ENCODE measurements at regions of chr5 and their contacts with region 1.

Region 1: DNA sequence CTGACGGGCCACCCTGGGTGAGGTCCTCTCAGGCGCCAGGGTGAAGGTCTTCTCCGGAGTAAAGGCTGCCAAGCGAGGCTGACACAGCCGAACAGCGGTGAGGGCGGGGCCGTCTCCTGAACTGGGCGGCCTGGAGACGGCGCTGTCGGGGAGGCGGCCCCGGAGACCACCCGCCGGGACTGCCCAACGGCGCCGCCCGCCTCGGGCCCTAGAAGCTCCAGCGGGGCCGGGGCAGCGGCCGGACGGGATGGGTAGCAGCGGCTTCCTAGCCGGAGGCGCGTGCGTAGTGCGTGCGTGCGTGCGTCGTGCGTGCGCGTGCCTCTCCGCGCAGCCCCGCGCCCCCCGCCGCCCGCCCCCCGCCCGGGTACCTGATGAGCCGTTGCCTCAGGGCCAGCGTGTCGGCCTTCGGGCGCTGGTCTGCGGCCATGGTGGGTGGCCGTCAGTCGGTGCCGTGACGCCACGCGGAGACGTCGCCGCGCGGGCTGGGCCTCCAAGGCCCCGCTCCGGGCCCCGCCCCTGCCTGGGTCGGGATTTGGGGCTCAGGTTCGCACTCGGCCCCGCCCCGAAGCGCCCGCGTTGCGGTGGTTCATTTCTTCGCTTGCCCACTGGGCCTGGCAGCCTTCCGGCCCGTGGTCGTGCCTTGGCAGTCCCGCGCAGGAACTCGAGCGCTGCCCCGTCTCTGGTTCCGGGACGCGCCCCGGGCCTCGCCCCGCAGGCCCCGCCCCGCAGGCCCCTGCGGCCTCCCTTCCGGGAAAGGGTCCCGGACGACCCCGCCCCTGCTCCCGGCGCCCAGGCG is at the start of gene PHYKPL:
- H3K4me3 ChIP-seq: peak within 1 kb of the TSS; percentile 76
- H3K27ac ChIP-seq: peak within 1 kb of the TSS; percentile 92
- H3K4me1 ChIP-seq: no peaks in the 10 kb centered on the region
- CTCF ChIP-seq: peak; percentile 67

Region 2: DNA sequence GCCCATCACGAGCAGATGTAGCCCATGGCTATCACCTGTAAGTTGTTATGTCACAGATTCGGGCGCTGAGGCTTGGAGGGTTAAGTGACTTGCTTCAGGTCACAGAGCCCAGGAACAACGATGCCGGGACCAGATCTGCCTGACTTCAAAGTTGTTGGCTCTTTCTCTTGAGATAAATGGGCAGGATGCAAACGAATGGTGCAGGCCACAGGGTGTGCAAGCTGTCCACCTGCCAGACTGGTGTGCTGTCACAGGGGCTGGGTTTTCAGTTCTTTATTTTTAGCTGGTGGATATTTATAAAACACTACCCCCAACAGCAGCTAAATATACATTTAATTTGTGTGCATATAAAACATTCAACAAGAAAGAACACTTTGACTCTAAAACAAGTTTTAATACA is 17.9 kb after region 1 on chr5:
- CTCF ChIA-PET with region 1: interaction called, 13 read pairs
- POLR2A ChIA-PET with region 1: no interaction called
- H3K4me3 ChIP-seq: no peak overlapping the region
- H3K27ac ChIP-seq: no peak overlapping the region
- H3K4me1 ChIP-seq: no peaks in the 10 kb centered on the region
- CTCF ChIP-seq: no peak

Region 3: GRCh38 chr5:178309271-178310013 is 77.1 kb after region 1 on chr5:
- CTCF ChIA-PET with region 1: no interaction called
- POLR2A ChIA-PET with region 1: no interaction called
- H3K4me3 ChIP-seq: no peak overlapping the region
- H3K27ac ChIP-seq: no peak overlapping the region
- H3K4me1 ChIP-seq: no peaks in the 10 kb centered on the region
- CTCF ChIP-seq: no peak

Measured in HEK293 (cell line).